Vagina (tissue), 2 donors: ENCODE measurements at regions of chr15 and their contacts with region 1.

Region 1: DNA sequence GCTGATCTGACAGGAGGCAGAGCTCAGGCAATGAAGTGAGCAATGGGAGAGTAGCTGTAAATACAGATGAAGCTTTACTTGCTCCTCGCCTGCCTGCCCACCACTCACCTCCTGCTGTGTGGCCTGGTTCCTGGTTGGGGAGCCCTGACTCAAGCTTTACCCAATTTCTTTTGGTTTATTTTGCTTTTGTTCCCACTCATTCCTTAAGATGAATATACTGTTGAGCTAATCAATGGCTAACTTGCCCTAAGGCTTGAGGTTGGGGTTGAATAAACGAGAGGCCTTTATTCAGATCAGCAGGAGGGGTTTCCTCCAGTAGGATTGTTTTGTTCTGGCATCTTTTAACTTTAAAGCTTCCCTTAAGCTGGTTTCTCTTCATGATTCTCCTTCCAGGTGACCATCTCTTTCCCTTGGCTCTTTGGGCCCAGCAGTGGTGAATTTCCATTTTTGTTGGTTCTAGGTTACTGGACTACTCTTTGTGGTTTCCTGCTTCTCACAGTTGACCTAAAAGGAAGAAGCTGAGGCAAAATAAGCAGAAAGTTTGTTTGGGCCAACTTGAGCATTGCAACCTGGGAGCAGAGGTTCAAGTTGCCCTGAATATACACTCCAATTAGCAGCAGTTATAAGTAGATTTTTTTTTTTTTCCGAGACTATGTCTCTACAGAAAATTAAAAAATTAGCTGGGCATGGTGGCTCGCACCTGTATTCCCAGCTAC is 44.4 kb downstream of the STARD9 start:
- DNase-seq: no peak
- H3K4me3 ChIP-seq: no peak overlapping the region
- H3K27ac ChIP-seq: no peak overlapping the region
- H3K4me1 ChIP-seq: peaks cover 6% of the 10 kb centered on the region
- H3K27me3 ChIP-seq: no peaks in the 10 kb centered on the region
- CTCF ChIP-seq: no peak
- POLR2A ChIP-seq: no peak

Region 2: DNA sequence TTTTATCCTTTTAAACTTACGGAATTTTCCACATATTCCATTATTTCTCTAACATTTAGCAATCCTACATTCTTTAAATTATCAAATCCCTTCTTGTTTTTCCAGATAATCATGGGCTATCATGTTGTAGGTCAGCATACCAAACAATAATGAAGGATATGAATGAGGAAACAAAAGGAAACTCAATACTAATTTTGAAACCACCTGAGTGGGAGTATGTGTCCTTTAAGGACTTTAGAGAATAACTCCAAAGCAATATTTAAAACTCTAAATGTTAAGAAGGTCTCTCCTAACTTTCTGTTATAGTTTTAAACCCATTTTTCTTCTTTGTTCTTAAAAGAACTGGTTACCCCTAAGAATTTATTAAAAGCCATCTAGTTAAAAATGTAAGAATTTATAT is 830.2 kb after region 1 on chr15:
- intact Hi-C with region 1: loop called (anchors 5 kb)
- DNase-seq: no peak
- H3K4me3 ChIP-seq: no peak overlapping the region
- H3K27ac ChIP-seq: no peak overlapping the region
- H3K4me1 ChIP-seq: no peaks in the 10 kb centered on the region
- H3K27me3 ChIP-seq: no peaks in the 10 kb centered on the region
- CTCF ChIP-seq: no peak
- POLR2A ChIP-seq: no peak